A673 (cell line): ENCODE measurements at regions of chr1 and their contacts with region 1.

Region 1: GRCh38 chr1:88180449-88181108 is 503.5 kb upstream of the PKN2 start:
- DNase-seq: peak; percentile 84
- H3K4me3 ChIP-seq: no peak overlapping the region
- H3K27ac ChIP-seq: no peak overlapping the region
- H3K4me1 ChIP-seq: no peaks in the 10 kb centered on the region
- H3K27me3 ChIP-seq: no peaks in the 10 kb centered on the region
- CTCF ChIP-seq: peak; percentile 96

Region 2: DNA sequence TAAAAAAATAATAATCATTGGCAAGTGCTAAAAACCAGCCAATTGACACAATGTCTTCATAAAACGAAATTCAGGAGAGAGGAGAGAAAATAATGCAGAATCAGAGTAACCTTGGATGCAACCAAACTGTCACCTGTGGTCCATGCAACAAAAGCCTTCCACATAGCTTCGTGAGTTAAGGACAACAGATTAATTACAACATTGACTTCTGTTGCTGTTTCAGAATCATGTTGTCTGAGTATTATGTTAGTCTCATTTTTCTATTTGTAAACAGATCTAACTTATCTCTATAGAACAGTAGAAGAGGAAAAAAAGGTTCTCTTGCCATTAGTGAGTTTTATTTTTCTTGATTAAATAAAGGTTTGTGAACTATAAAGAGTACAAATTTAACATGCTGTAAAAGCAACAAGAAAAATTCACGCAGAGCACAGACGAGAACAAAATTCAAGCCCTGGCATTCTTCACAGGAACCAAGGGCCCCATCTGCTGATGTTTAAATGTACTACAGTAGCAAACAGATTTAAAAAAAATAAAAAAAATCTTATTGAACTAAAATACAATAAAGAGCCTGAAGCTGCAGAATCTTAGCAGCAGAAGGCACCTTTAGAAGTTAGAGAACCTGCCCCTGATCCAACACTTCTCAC is 122.4 kb after region 1 on chr1:
- CTCF ChIA-PET with region 1: interaction called, 6 read pairs
- POLR2A ChIA-PET with region 1: no interaction called
- intact Hi-C with region 1: loop called (anchors 2 kb)
- DNase-seq: peak; percentile 38
- H3K4me3 ChIP-seq: no peak overlapping the region
- H3K27ac ChIP-seq: no peak overlapping the region
- H3K4me1 ChIP-seq: no peaks in the 10 kb centered on the region
- H3K27me3 ChIP-seq: no peaks in the 10 kb centered on the region
- CTCF ChIP-seq: peak; percentile 60

Region 3: GRCh38 chr1:88549536-88549935 is 369.0 kb after region 1 on chr1:
- CTCF ChIA-PET with region 1: interaction called, 17 read pairs
- POLR2A ChIA-PET with region 1: no interaction called
- intact Hi-C with region 1: loop called (anchors 2 kb)
- DNase-seq: peak; percentile 42
- H3K4me3 ChIP-seq: no peak overlapping the region
- H3K27ac ChIP-seq: no peak overlapping the region
- H3K4me1 ChIP-seq: peaks cover 11% of the 10 kb centered on the region
- H3K27me3 ChIP-seq: no peaks in the 10 kb centered on the region
- CTCF ChIP-seq: peak; percentile 65

Region 4: GRCh38 chr1:88595355-88596002 is 414.9 kb after region 1 on chr1:
- CTCF ChIA-PET with region 1: no interaction called
- POLR2A ChIA-PET with region 1: no interaction called
- intact Hi-C with region 1: loop called (anchors 5 kb)
- DNase-seq: peak; percentile 70
- H3K4me3 ChIP-seq: no peak overlapping the region
- H3K27ac ChIP-seq: no peak overlapping the region
- H3K4me1 ChIP-seq: no peaks in the 10 kb centered on the region
- H3K27me3 ChIP-seq: no peaks in the 10 kb centered on the region
- CTCF ChIP-seq: peak; percentile 59